Left cardiac atrium (tissue), 4 donors: ENCODE measurements at regions of chr4 and their contacts with region 1.

Region 1: DNA sequence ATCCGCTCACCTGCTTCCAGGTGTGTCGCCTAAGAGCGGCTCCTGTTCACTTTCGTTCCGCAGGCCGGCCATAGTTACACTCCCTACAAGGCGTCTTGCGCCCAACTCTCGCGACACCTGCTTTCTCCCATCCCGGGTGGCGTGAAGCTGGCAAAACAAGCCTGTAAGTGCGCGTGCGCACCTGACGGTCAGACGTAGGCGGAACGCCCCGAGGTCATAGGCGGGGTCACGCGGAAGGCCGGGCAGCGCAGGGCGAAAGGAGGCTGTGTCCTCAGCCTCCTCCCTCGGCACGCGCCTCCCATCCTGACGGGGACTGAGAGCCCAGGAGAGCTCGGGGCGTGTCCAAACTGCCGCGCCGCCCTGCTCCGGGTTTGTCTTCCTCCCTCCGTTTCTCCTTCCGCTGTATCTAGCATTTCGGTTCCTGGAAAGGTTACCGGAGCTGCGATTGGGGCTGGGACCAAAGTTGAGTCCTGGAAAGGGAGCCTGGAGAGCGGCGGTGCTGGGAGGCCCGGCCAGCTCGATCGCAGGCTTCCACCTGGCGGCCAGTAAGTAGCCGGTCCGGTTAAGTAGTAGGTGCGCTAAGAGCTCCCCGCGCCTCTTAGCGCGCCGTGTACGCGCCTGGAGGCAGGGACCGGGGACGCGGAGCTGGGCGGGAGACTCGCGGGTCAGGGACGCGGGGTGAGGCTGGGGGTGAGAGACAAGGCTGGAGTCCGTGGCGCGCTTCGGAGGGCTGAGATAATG is at the starts of genes ABHD18 and MFSD8:
- DNase-seq: peak; percentile 100
- ATAC-seq: peak; percentile 96 to 99
- total RNA-seq, gene ABHD18: 8.2 to 10.5 TPM
- total RNA-seq, gene MFSD8: 9.8 to 10.5 TPM

Region 2: GRCh38 chr4:127880764-127881562 is 84.3 kb before region 1 on chr4 and contains the start of gene PLK4:
- intact Hi-C with region 1: no loop called
- DNase-seq: peak; percentile 96
- ATAC-seq: peak; percentile 99
- total RNA-seq, gene PLK4: 0.68 to 2.4 TPM

Region 3: DNA sequence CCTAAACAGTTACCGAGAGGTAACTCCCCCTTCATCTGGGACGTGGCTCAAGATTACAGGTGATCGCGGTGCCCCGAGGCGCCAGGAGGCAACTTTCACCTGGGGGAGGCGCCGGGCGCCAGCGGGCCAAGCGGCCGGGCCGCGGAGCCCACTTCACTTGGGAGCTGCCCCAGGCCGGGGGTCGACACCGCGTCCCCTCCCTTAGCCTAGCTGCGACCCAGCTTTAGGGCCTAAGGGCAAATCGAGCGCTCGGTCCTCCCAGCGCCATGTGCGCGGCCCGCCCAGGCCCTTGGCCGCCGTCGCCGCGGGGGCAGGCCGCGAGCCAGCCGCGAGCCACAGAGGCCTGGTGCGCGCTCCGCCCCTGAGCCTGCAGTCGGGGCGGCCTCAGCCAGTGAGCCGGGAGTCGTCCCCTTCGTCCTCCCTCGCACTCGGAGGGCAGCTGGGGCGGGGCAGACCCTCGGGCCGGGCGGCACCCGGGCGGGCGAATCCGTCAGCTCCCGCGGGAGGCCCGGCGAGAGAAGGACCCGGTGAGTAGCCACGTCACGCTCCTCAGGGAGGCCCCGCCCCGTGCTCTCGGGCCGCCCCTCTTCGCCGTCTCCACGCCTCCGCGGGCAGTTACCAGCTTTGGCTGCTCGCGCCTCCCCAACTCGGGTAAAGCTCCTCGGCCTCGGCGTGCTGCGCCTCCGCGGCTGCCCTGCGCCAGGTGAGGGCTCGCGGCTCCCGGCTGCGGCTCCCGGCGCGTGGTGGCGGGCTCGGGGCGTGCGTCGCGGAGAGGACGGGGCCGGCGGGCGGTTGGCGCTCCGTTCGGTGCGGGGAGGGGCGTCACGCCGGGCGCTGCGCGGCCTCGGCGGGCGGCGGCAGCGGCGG is 95.7 kb after region 1 on chr4 and contains the start of gene LARP1B:
- intact Hi-C with region 1: loop called in 1 of 2 experiments (anchors 10 kb)
- DNase-seq: peak; percentile 97
- ATAC-seq: peak; percentile 96 to 97
- total RNA-seq, gene LARP1B: 9.7 to 15.7 TPM